BJ (cell line): ENCODE measurements at regions of chr5 and their contacts with region 1.

Region 1: DNA sequence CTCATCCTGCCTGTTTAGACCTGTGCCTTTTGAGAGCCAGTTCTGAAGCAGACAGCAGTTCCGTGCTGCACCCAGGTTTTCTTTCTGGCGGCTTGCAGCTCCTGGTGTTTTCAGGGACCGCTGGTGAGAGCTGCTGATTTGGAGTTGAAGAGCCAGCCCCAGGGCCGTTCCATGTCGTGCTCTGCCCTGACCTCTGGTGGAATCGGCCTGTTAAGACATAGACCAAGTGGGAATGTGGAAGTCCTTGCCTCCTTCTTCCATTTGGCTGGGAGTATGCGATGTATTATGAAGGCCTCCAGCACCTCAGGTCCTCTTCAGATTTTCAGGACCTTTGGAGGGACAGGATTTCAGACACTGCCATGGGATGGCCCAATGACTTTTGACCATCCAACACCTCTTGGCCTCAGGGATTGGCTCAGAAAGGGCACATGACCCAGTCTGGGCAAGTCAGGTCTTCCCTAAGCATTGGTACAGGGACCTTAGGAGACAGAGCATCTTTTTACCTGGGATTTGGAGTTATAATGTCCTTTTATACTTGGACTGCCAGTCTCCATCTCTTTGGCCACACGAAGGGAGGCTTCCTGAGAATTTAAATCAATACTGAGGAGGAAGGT is 136.1 kb upstream of the CLINT1 start:
- DNase-seq: no peak
- H3K4me3 ChIP-seq: no peak overlapping the region
- H3K27me3 ChIP-seq: no peaks in the 10 kb centered on the region
- CTCF ChIP-seq: peak; percentile 85

Region 2: GRCh38 chr5:157761690-157762621 is 233.1 kb before region 1 on chr5:
- CTCF ChIA-PET with region 1: interaction called, 33 read pairs
- POLR2A ChIA-PET with region 1: no interaction called
- DNase-seq: no peak
- H3K4me3 ChIP-seq: no peak overlapping the region
- H3K27me3 ChIP-seq: no peaks in the 10 kb centered on the region
- CTCF ChIP-seq: peak; percentile 82

Region 3: GRCh38 chr5:157858527-157859226 is 136.3 kb before region 1 on chr5 and contains the start of gene CLINT1:
- CTCF ChIA-PET with region 1: interaction called, 11 read pairs
- POLR2A ChIA-PET with region 1: no interaction called
- DNase-seq: no peak
- H3K4me3 ChIP-seq: peak within 1 kb of the TSS; percentile 86
- H3K27me3 ChIP-seq: no peaks in the 10 kb centered on the region
- CTCF ChIP-seq: no peak
- polyA plus RNA-seq, gene CLINT1: 93.2 and 164 TPM in 2 replicates

Region 4: DNA sequence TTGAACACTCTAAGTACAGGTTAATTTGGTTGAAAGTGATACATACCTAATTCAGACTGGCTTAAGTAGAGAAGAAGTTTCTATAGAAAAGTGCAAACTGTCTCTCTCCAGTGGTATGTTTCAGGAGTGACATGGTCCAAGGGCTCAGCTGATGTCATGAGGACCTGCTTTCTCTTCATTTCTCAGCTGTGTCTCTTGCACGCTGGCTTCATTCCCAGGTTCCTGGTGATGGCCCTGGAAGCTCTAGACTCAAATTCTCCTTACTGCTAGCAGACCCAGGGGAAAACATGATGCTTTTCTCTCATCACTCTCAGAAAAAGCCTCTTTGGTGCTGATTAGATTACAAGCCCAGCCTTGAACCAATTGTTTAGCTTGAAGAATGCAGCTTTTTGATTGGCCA is 75.8 kb after region 1 on chr5:
- CTCF ChIA-PET with region 1: no interaction called
- POLR2A ChIA-PET with region 1: no interaction called
- DNase-seq: no peak
- H3K4me3 ChIP-seq: no peak overlapping the region
- H3K27me3 ChIP-seq: no peaks in the 10 kb centered on the region
- CTCF ChIP-seq: no peak